ENCODE measurements at regions of chr20 and their contacts with region 1.

Region 1: DNA sequence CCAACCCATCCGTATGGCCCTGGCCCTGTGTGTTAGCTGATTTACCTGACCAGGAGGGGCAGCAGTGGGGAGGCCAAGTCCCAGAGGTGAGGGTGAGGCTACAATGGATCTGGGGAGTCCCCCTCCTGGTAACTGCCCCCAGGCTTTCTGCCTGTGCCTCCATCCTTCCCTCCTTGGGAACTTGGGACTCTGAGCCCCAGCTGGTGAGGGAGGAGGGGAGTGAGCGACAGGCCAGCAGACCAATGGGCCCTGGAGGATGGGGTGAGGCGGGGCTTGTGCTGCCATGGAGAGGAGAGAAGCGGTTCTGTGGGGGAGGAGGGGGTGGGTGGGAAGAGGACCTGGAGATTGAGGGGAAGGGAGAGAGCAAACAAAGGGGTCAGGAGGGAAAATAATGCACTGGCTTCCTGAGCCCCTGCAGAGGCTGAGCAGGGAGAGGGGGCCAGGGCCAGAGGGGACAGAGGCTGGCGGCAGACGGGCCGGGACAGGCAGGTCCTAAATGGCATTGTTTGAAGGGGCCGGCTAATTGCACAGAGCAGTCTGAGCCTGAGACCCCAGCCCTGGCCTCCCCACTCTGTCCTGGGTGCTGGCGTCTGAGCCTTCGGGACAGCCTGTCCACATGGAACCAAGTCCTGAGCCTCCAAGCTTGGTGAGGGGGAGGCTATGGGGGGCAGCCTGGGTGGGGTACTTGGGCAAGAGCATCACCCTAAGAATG is 17.5 kb downstream of the DNMT3B start:
- DNase-seq: no peak
- ATAC-seq: no peak
- H3K4me3 ChIP-seq: no peak overlapping the region
- H3K4me3 Mint-ChIP-seq: no peak overlapping the region
- H3K27ac ChIP-seq: no peak overlapping the region
- H3K27ac Mint-ChIP-seq: no peak overlapping the region
- H3K4me1 ChIP-seq: no peaks in the 10 kb centered on the region
- H3K4me1 Mint-ChIP-seq: peaks cover 2% of the 10 kb centered on the region
- H3K27me3 ChIP-seq: no peaks in the 10 kb centered on the region
- H3K27me3 Mint-ChIP-seq: no peaks in the 10 kb centered on the region
- CTCF ChIP-seq: no peak

Region 2: DNA sequence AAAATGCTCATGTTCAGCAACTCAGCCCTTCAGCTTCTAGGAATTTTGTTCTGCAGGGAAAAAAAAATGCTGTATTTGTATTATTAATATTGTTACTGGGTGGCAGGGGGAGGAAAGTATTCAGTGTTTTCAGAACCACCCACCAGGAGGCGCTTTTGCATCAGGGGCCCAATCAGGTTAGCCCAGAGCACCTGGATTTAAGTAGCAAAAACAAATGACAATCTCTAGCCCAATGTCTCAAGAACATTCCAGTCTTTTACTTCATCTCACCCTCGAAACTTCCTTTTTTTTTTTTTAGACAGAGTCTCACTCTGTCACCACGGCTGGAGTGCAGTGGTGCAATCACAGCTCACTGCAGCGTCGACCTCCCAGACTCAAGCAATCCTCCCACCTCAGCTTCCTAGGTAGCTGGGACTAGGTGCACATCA is 105.3 kb before region 1 on chr20:
- CTCF ChIA-PET with region 1: interaction called, 138 read pairs
- POLR2A ChIA-PET with region 1: interaction called, 3 read pairs
- intact Hi-C with region 1: no loop called
- DNase-seq: peak; percentile 58
- ATAC-seq: no peak
- H3K4me3 ChIP-seq: no peak overlapping the region
- H3K4me3 Mint-ChIP-seq: peak overlapping the region; percentile 0
- H3K27ac ChIP-seq: no peak overlapping the region
- H3K27ac Mint-ChIP-seq: no peak overlapping the region
- H3K4me1 ChIP-seq: peaks cover 23 to 26% of the 10 kb centered on the region in 2 donors
- H3K4me1 Mint-ChIP-seq: peaks cover 36% of the 10 kb centered on the region
- H3K27me3 ChIP-seq: no peaks in the 10 kb centered on the region
- H3K27me3 Mint-ChIP-seq: no peaks in the 10 kb centered on the region
- CTCF ChIP-seq: peak; percentile 72

Region 3: DNA sequence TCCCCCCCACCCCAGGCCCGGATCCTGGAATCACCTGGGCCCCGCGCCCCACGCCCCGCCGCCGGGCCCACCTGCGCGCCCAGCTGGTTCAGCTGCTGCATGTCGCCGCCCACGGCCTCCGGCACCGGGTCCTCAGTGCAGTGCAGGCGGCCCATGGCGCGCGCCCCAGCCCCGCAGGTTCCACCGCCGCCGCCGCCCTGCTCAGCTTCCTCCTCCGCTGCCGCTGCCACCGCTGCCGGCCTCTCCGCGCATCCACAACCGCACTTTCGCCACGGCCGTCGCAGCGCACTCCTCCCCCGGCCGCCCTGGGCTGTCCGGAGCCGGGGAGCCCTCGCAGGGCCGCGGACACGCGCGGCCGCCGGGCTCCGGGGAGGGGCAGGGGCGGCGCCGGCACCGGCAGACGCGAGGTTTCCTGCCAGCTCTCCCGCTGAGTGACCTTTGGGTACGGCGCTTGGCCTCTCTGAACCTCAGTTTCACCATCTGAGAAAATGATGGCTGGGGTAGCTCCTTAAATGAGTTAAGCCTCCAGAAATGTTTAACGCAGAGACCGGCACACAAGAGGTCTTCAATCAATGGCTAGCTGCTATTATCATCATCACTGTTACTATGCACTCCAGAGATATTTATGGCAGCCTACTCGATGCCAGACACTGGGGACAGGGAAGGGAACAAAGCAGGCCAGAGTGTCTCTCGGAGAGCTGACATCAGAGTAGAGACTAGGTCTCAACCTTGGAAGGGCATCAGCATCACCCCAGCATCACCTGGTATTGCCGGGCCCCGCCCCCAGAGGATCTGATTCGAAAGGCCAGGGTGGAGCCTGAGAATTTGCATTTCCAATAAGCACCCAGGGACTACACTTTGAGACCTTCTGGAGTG is 36.2 kb before region 1 on chr20 and contains the start of gene COMMD7:
- CTCF ChIA-PET with region 1: interaction called, 15 read pairs
- POLR2A ChIA-PET with region 1: no interaction called
- intact Hi-C with region 1: no loop called
- DNase-seq: peak; percentile 83
- ATAC-seq: peak; percentile 79
- H3K4me3 ChIP-seq: peak within 1 kb of the TSS; percentile 59 to 94 (median 79)
- H3K4me3 Mint-ChIP-seq: peak within 1 kb of the TSS; percentile 99
- H3K27ac ChIP-seq: peak within 1 kb of the TSS; percentile 66 to 88
- H3K27ac Mint-ChIP-seq: peak within 1 kb of the TSS; percentile 98
- H3K4me1 ChIP-seq: peaks cover 13 to 18% of the 10 kb centered on the region in 2 donors
- H3K4me1 Mint-ChIP-seq: peaks cover 27% of the 10 kb centered on the region
- H3K27me3 ChIP-seq: no peaks in the 10 kb centered on the region
- H3K27me3 Mint-ChIP-seq: no peaks in the 10 kb centered on the region
- CTCF ChIP-seq: no peak
- total RNA-seq, gene COMMD7: 24.5 and 29.5 TPM in 2 replicates

Region 4: GRCh38 chr20:32762149-32762753 is 17.4 kb before region 1 on chr20 and contains the start of gene DNMT3B:
- CTCF ChIA-PET with region 1: interaction called, 18 read pairs
- POLR2A ChIA-PET with region 1: no interaction called
- intact Hi-C with region 1: no loop called
- DNase-seq: peak; percentile 80
- ATAC-seq: peak; percentile 86
- H3K4me3 ChIP-seq: peak within 1 kb of the TSS; percentile 44 to 74 (median 68)
- H3K4me3 Mint-ChIP-seq: peak within 1 kb of the TSS; percentile 90
- H3K27ac ChIP-seq: no peak within 1 kb of the TSS
- H3K27ac Mint-ChIP-seq: peak within 1 kb of the TSS; percentile 67
- H3K4me1 ChIP-seq: peaks cover 21 to 22% of the 10 kb centered on the region in 2 donors
- H3K4me1 Mint-ChIP-seq: peaks cover 24% of the 10 kb centered on the region
- H3K27me3 ChIP-seq: peaks cover 0 to 21% (median 7%) of the 10 kb centered on the region in 4 experiments
- H3K27me3 Mint-ChIP-seq: no peaks in the 10 kb centered on the region
- CTCF ChIP-seq: no peak
- total RNA-seq, gene DNMT3B: 0.36 and 0.47 TPM in 2 replicates

Region 5: GRCh38 chr20:32767418-32768198 is 12.0 kb before region 1 on chr20:
- CTCF ChIA-PET with region 1: interaction called, 18 read pairs
- POLR2A ChIA-PET with region 1: no interaction called
- intact Hi-C with region 1: no loop called
- DNase-seq: no peak
- ATAC-seq: no peak
- H3K4me3 ChIP-seq: no peak overlapping the region
- H3K4me3 Mint-ChIP-seq: no peak overlapping the region
- H3K27ac ChIP-seq: no peak overlapping the region
- H3K27ac Mint-ChIP-seq: no peak overlapping the region
- H3K4me1 ChIP-seq: peaks cover 12 to 15% of the 10 kb centered on the region in 2 donors
- H3K4me1 Mint-ChIP-seq: peaks cover 17% of the 10 kb centered on the region
- H3K27me3 ChIP-seq: peaks cover 0 to 13% (median 5%) of the 10 kb centered on the region in 4 experiments
- H3K27me3 Mint-ChIP-seq: no peaks in the 10 kb centered on the region
- CTCF ChIP-seq: no peak

Region 6: GRCh38 chr20:32789896-32790750 is 10.5 kb after region 1 on chr20:
- CTCF ChIA-PET with region 1: interaction called, 36 read pairs
- POLR2A ChIA-PET with region 1: interaction called, 4 read pairs
- intact Hi-C with region 1: no loop called
- DNase-seq: peak; percentile 75
- ATAC-seq: peak; percentile 70
- H3K4me3 ChIP-seq: no peak overlapping the region
- H3K4me3 Mint-ChIP-seq: no peak overlapping the region
- H3K27ac ChIP-seq: no peak overlapping the region
- H3K27ac Mint-ChIP-seq: no peak overlapping the region
- H3K4me1 ChIP-seq: peaks cover 27 to 33% of the 10 kb centered on the region in 2 donors
- H3K4me1 Mint-ChIP-seq: peaks cover 35% of the 10 kb centered on the region
- H3K27me3 ChIP-seq: no peaks in the 10 kb centered on the region
- H3K27me3 Mint-ChIP-seq: no peaks in the 10 kb centered on the region
- CTCF ChIP-seq: peak; percentile 99

Region 7: GRCh38 chr20:32877507-32877906 is 97.9 kb after region 1 on chr20:
- CTCF ChIA-PET with region 1: no interaction called
- POLR2A ChIA-PET with region 1: no interaction called
- intact Hi-C with region 1: no loop called
- DNase-seq: no peak
- ATAC-seq: no peak
- H3K4me3 ChIP-seq: no peak overlapping the region
- H3K4me3 Mint-ChIP-seq: no peak overlapping the region
- H3K27ac ChIP-seq: no peak overlapping the region
- H3K27ac Mint-ChIP-seq: no peak overlapping the region
- H3K4me1 ChIP-seq: no peaks in the 10 kb centered on the region
- H3K4me1 Mint-ChIP-seq: no peaks in the 10 kb centered on the region
- H3K27me3 ChIP-seq: no peaks in the 10 kb centered on the region
- H3K27me3 Mint-ChIP-seq: no peaks in the 10 kb centered on the region
- CTCF ChIP-seq: no peak

Measured in B cell (primary cell).